Natural killer cell (primary cell): ENCODE measurements at regions of chr13 and their contacts with region 1.

Region 1: DNA sequence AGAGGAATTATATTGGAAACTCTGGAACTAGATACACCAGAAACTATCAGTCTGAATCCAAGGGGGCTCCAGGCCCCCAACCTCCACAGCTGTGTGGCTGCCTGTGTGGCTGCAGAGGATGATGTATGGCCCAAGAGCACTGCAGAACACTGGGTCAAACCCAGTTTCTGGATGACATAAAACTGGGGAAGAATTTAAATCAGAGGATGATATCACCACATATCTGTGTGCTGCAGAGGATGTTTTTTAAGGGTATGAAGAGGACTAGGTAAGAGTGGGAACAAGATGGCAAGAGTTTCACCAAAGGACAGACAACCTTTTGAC is 226.4 kb downstream of the SUCLA2 start:
- DNase-seq: no peak
- ATAC-seq: no peak
- H3K4me3 ChIP-seq: no peak overlapping the region
- H3K4me3 Mint-ChIP-seq: no peak overlapping the region
- H3K27ac ChIP-seq: no peak overlapping the region
- H3K27ac Mint-ChIP-seq: no peak overlapping the region
- H3K4me1 ChIP-seq: no peaks in the 10 kb centered on the region
- H3K4me1 Mint-ChIP-seq: peaks cover 3 to 4% of the 10 kb centered on the region in 2 donors
- H3K27me3 ChIP-seq: no peaks in the 10 kb centered on the region
- H3K27me3 Mint-ChIP-seq: peaks cover 4 to 26% of the 10 kb centered on the region in 2 donors
- CTCF ChIP-seq: no peak

Region 2: DNA sequence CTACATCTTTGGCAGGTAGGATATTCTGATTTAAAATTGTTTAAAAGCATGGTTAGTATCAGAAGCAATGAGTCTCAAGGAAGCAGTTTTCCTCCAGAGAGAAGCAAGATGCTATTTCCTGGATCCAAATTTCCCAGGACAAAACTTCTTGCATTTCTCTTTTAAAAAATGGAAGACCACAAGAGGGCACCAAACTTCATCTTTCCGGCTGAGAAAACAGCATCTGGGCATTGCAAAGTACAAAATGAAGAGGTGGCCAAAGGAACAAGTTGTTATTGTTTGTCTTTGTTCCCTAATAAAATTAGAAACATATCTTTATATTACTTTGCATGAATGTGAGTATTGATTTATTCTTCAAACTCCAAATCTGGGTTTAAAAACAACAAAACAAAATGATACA is 1281.7 kb before region 1 on chr13:
- intact Hi-C with region 1: loop called (anchors 5 kb)
- DNase-seq: peak in 1 of 2 donors; percentile 62
- ATAC-seq: no peak
- H3K4me3 ChIP-seq: no peak overlapping the region
- H3K4me3 Mint-ChIP-seq: no peak overlapping the region
- H3K27ac ChIP-seq: no peak overlapping the region
- H3K27ac Mint-ChIP-seq: no peak overlapping the region
- H3K4me1 ChIP-seq: no peaks in the 10 kb centered on the region
- H3K4me1 Mint-ChIP-seq: no peaks in the 10 kb centered on the region
- H3K27me3 ChIP-seq: no peaks in the 10 kb centered on the region
- H3K27me3 Mint-ChIP-seq: peaks cover 7 to 11% of the 10 kb centered on the region in 2 donors
- CTCF ChIP-seq: peak; percentile 83

Region 3: GRCh38 chr13:46759846-46760245 is 1014.8 kb before region 1 on chr13:
- intact Hi-C with region 1: loop called (anchors 10 kb)
- DNase-seq: no peak
- ATAC-seq: no peak
- H3K4me3 ChIP-seq: no peak overlapping the region
- H3K4me3 Mint-ChIP-seq: no peak overlapping the region
- H3K27ac ChIP-seq: no peak overlapping the region
- H3K27ac Mint-ChIP-seq: no peak overlapping the region
- H3K4me1 ChIP-seq: peaks cover 4% of the 10 kb centered on the region
- H3K4me1 Mint-ChIP-seq: peaks cover 10 to 11% of the 10 kb centered on the region in 2 donors
- H3K27me3 ChIP-seq: peaks cover 6% of the 10 kb centered on the region
- H3K27me3 Mint-ChIP-seq: peaks cover 51 to 65% of the 10 kb centered on the region in 2 donors
- CTCF ChIP-seq: no peak

Region 4: DNA sequence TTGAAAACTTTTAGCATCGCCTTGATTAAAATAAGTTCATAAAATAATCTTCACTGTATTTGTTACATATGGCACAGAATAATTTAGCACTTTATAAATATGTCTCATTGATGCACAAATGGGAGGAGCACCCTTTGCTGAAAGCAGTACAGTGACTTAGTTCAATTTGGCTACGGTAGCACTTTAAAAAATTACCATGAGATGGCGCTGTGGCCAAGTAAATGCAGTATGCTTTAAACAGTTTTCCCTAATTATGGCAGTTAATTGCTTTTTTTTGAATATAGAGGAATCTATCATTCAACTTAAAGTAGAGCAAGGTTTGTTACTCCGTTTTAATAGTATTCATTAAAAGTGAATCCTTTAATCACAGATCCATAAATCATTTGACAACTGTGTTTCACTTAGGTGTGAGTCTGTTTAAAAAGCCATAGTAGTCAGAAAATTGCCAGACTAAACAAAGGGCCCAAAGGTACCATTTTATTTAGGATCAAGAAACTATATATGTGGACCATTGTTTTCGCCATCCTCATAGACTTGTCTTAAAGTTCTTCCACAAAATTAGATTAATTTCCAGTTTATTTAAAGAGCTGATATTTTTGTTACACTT is 942.9 kb before region 1 on chr13:
- intact Hi-C with region 1: loop called (anchors 5 kb)
- DNase-seq: peak in 1 of 2 donors; percentile 57
- ATAC-seq: peak in 1 of 3 donors; percentile 59
- H3K4me3 ChIP-seq: no peak overlapping the region
- H3K4me3 Mint-ChIP-seq: no peak overlapping the region
- H3K27ac ChIP-seq: no peak overlapping the region
- H3K27ac Mint-ChIP-seq: no peak overlapping the region
- H3K4me1 ChIP-seq: no peaks in the 10 kb centered on the region
- H3K4me1 Mint-ChIP-seq: no peaks in the 10 kb centered on the region
- H3K27me3 ChIP-seq: peaks cover 2% of the 10 kb centered on the region
- H3K27me3 Mint-ChIP-seq: peaks cover 10 to 16% of the 10 kb centered on the region in 2 donors
- CTCF ChIP-seq: peak; percentile 74